Calu3 (cell line): ENCODE measurements at regions of chr2 and their contacts with region 1.

Region 1: DNA sequence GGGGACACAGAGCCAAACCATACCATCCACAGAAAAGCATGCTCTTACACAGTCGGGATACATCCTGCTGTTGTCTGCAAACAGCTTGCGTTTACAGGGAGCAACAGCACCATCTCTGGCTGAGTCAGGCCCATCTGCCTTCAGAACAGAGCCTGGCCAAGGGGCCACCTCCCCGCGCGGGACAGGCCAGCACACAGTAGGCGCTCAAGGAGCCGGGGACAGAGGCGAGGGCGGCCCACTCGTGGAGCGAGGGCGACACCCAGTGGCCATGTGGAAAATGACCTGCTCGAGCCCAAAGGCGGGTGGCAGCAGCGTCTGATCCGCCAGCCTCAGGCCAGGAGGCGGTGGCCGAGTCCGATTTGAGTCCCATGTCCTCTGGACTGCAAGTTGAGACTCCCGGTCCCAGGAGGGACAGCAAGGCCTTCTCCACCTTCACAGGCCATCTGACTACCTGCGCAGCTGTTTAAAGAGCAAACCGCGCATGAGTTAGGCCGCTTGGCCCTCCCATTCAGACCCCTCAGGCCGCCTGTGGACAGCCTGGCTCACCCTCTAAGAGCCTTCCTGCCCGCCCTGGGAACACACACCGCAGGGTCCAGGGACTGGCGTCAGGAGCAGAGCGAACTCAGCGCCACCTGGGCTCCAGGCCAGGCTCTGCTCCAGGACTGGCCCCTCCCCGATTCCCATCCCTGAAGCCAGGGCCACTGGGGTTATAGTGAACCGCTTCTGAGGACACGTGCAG is 38.3 kb downstream of the TTC32 start:
- DNase-seq: peak; percentile 84
- H3K4me3 Mint-ChIP-seq: no peak overlapping the region
- H3K27ac Mint-ChIP-seq: no peak overlapping the region
- H3K4me1 Mint-ChIP-seq: no peaks in the 10 kb centered on the region
- H3K27me3 Mint-ChIP-seq: peaks cover 16% of the 10 kb centered on the region
- CTCF ChIP-seq: peak; percentile 98

Region 2: GRCh38 chr2:18435421-18436037 is 1427.9 kb before region 1 on chr2:
- CTCF ChIA-PET with region 1: no interaction called
- intact Hi-C with region 1: loop called (anchors 1 kb)
- DNase-seq: peak; percentile 46
- H3K4me3 Mint-ChIP-seq: no peak overlapping the region
- H3K27ac Mint-ChIP-seq: no peak overlapping the region
- H3K4me1 Mint-ChIP-seq: no peaks in the 10 kb centered on the region
- H3K27me3 Mint-ChIP-seq: peaks cover 43% of the 10 kb centered on the region
- CTCF ChIP-seq: peak; percentile 59

Region 3: DNA sequence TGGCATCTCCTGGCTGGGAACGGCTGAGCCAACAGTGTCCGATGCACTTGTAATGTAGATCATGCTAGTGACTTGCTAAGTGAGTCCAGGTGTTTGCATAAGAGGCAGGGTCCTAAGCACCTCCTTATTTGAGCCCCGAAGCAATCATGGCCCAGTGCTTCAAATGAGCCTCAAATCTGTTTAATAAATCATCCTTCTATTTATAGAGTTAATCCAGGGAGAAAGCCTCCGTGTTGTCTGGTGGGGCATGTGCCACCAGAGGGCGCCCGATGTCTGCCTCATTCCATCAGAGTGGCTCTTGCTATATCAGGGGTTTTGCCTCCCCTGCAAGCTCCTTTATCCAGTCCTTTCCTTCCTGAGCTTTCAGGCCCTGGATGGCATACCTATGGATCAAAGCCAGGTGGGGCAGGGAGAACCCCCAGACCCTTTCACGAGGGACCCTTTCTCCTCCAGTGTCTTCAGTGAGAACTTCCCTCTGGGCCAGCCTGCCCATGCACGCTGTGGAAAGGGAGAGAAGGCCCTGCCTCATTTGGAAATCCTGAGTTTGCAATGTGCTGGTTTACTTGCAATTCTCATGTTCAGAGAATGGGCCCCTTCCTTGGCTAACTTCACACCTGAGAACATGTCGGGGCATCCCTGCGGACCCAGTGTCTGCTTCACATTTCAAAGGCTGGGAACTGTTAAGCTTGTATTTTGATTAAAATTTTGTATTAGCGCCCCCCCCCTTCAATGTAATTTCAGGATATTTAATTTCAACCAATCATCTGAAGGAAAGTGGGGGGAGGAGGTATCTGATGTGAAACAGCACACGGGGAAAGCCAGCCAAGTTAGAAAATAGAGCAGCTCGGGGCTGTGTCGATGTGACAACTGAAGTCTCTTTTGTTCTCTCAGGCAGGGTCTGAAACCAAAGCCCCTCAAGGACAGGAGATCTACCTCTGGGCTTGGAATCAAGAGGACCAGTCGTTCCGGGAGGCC is 1342.7 kb before region 1 on chr2:
- CTCF ChIA-PET with region 1: interaction called, 3 read pairs
- intact Hi-C with region 1: loop called (anchors 10 kb)
- DNase-seq: peak; percentile 83
- H3K4me3 Mint-ChIP-seq: no peak overlapping the region
- H3K27ac Mint-ChIP-seq: no peak overlapping the region
- H3K4me1 Mint-ChIP-seq: peaks cover 10% of the 10 kb centered on the region
- H3K27me3 Mint-ChIP-seq: peaks cover 56% of the 10 kb centered on the region
- CTCF ChIP-seq: peak; percentile 89

Region 4: DNA sequence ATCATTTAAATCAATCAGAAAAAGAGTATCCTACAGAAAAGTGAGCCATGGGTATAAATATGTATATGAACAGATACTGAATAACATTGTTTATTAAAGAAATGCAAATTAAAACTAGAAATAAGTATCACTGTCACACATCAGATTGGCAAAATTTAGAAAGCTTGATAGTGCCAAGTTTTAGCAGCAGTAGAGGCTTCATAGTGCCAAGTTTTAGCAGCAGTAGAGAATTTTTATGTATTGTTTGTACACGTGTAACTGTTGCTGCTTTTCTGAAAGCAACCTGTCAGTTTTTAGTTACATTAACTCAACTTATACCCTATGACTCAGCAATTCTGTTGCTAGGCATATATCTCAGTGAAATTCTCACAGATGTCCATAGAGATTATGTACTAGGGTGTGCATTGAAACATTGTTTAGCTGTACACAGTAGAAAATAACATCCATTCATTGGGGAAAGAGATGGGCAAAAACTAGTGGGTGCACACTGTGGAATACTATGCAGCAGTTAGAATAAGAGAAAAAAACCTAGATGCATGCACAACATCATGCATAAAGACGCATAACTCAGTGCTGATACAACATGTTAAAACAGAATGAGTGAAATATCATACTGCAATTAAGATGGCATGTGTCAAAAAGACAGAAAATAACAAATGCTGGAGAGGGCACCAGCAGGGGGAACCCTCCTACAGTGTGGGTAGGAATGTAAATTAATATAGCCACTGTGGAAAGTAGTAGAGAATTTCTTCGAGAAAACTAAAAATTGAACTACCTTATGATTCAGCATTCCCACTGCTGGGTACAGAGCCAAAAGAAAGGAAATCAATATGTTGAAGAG is 979.6 kb before region 1 on chr2:
- CTCF ChIA-PET with region 1: no interaction called
- intact Hi-C with region 1: loop called (anchors 5 kb)
- DNase-seq: peak; percentile 54
- H3K4me3 Mint-ChIP-seq: no peak overlapping the region
- H3K27ac Mint-ChIP-seq: no peak overlapping the region
- H3K4me1 Mint-ChIP-seq: peaks cover 8% of the 10 kb centered on the region
- H3K27me3 Mint-ChIP-seq: no peaks in the 10 kb centered on the region
- CTCF ChIP-seq: no peak

Region 5: GRCh38 chr2:19369341-19369955 is 494.0 kb before region 1 on chr2:
- CTCF ChIA-PET with region 1: interaction called, 7 read pairs
- intact Hi-C with region 1: loop called (anchors 1 kb)
- DNase-seq: peak; percentile 38
- H3K4me3 Mint-ChIP-seq: no peak overlapping the region
- H3K27ac Mint-ChIP-seq: no peak overlapping the region
- H3K4me1 Mint-ChIP-seq: no peaks in the 10 kb centered on the region
- H3K27me3 Mint-ChIP-seq: peaks cover 36% of the 10 kb centered on the region
- CTCF ChIP-seq: peak; percentile 17

Region 6: DNA sequence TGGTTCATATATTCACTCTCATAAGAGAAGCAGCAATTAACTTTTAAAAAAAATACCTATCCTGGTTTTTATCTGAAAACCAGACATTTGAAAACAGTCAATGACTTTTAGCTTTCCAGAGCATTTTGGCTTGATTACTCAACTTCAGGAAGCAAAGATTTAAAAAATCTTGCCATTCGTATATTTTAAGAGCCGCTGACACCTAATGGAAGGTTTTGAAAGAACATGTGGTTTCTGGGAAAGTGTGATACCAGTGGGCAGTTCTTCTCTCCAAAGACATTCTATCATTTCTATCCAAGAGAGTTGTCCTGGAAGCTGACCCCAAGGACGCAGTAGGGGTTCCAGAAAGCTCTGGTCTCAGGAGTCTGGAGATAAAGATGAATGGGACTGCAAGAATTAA is 196.4 kb before region 1 on chr2:
- CTCF ChIA-PET with region 1: no interaction called
- intact Hi-C with region 1: loop called (anchors 5 kb)
- DNase-seq: no peak
- H3K4me3 Mint-ChIP-seq: no peak overlapping the region
- H3K27ac Mint-ChIP-seq: no peak overlapping the region
- H3K4me1 Mint-ChIP-seq: peaks cover 25% of the 10 kb centered on the region
- H3K27me3 Mint-ChIP-seq: no peaks in the 10 kb centered on the region
- CTCF ChIP-seq: no peak

Region 7: GRCh38 chr2:19769513-19769912 is 94.0 kb before region 1 on chr2:
- CTCF ChIA-PET with region 1: no interaction called
- intact Hi-C with region 1: loop called (anchors 2 kb)
- DNase-seq: no peak
- H3K4me3 Mint-ChIP-seq: no peak overlapping the region
- H3K27ac Mint-ChIP-seq: no peak overlapping the region
- H3K4me1 Mint-ChIP-seq: no peaks in the 10 kb centered on the region
- H3K27me3 Mint-ChIP-seq: peaks cover 56% of the 10 kb centered on the region
- CTCF ChIP-seq: no peak

Region 8: GRCh38 chr2:21353879-21354679 is 1490.6 kb after region 1 on chr2:
- CTCF ChIA-PET with region 1: no interaction called
- intact Hi-C with region 1: no loop called
- DNase-seq: no peak
- H3K4me3 Mint-ChIP-seq: no peak overlapping the region
- H3K27ac Mint-ChIP-seq: no peak overlapping the region
- H3K4me1 Mint-ChIP-seq: no peaks in the 10 kb centered on the region
- H3K27me3 Mint-ChIP-seq: peaks cover 16% of the 10 kb centered on the region
- CTCF ChIP-seq: no peak